ENCODE measurements at regions of chr2 and their contacts with region 1.

Region 1: DNA sequence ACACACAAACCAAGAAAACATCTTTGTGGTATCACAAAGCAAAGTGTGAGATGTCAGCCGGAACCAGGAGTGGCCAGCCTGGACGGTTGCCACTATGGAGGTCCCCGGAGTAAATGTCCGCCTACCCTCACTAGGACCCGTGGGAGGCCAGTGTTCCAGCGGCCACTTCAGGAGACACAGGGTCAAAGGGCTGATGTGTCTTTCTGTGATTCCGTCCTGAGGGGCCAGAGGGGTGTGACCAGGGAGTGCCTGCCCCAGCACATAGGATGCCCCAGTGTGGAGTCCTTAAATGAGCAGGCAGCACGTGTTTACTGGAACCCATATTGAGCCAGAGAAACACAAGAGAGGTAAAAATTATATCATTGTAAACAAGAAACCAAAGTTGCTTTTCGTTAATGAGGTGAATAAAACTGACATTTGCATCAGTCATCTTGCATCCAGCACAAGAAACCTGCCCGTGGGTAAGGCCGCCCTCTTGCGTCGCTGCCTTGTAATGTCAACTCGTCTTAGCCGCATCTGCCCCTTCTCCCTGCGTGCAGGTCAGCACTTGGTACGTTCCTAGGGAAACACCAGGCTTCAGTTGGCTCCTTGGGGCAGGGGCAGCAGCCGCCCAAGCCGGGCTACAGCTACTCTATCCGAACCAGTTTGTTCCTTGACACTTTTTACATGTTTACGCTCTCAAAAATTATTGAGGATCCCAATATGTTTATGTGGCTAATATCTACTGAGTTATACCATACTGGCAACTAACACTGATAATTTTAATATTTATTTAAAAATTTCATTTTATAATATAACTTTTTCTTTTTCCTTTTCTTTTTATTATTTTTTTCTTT is 46.7 kb upstream of the LAPTM4A start:
- DNase-seq: peak; percentile 47
- H3K4me3 ChIP-seq: no peak overlapping the region
- CTCF ChIP-seq: peak; percentile 93

Region 2: GRCh38 chr2:19955544-19956422 is 142.3 kb before region 1 on chr2:
- CTCF ChIA-PET with region 1: interaction called, 78 read pairs
- POLR2A ChIA-PET with region 1: no interaction called
- DNase-seq: peak; percentile 16
- H3K4me3 ChIP-seq: no peak overlapping the region
- CTCF ChIP-seq: peak; percentile 80

Region 3: DNA sequence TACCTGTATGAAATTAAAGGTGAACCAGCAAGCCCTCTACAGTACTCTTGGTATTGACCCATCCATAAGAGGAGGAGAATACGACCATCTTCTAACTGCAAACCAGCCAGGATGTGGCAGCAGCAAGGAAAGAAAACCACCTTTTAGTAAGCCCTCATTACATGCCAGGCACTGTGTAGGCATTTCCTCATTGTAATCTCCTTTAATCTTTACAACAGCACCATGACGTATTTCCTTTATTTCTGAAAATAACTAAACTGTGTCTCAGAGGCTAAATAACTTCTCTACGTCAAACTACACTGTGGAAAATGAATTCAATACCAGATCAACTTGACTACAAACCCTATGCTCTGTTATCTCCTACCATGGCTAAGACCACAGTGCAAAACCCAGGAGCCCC is 126.4 kb before region 1 on chr2:
- CTCF ChIA-PET with region 1: interaction called, 14 read pairs
- POLR2A ChIA-PET with region 1: no interaction called
- DNase-seq: no peak
- H3K4me3 ChIP-seq: no peak overlapping the region
- CTCF ChIP-seq: no peak

Region 4: DNA sequence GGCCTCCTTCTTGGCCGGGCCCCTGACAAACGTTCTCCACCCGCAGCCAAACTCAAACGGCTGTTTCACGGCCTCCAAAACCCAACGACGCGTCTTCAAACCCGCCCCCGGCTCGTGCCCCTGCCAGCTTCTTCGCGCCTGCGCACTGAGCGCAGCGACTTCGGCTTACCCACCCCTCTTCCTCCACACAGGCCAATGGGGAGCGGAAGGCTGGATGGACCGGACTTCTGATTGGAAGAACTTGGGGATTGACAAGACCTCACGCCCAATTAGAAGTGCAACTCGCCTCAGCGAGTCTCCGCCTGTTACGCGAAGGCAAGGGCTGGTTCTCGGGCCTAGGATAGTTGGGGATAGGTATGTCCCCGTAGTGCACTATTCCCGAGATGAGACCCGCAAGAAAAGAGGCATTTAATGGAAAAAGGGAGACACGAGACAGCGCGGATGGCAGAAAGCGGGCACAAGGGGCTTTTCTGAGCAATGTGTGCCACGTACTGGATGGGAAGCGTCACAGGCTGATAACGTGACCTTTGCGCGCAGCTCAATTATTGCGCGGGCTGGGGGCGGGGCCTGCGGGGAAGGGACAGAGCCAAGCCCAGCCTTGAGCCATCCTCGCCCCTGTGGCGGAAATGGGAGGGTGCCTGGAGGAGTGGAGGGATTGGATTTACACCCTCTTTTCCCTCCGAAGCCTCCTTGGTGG is 46.4 kb before region 1 on chr2 and contains the start of gene LAPTM4A:
- CTCF ChIA-PET with region 1: interaction called, 37 read pairs
- POLR2A ChIA-PET with region 1: interaction called, 3 read pairs
- DNase-seq: peak; percentile 100
- H3K4me3 ChIP-seq: peak within 1 kb of the TSS; percentile 88
- CTCF ChIP-seq: peak; percentile 13

Region 5: DNA sequence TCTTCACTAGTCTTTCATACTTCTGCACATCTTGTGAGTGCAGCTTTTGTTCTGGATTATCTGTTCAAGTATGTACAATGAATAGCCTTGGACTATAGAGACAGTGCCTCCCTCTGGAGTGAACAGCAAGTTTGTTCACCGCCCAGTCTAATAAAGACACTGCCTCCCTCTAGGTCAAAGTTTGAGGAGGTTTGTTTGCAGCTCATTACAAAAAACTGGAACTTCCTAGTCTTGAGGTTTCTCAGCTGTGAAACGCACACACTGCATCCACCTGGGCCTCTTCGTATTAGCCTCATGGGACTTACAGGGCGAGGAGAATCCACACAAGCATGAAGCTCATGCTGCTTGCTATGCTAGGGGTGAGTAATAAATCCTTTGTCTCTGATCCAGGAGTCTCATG is 20.6 kb before region 1 on chr2:
- CTCF ChIA-PET with region 1: interaction called, 19 read pairs
- POLR2A ChIA-PET with region 1: no interaction called
- DNase-seq: no peak
- H3K4me3 ChIP-seq: no peak overlapping the region
- CTCF ChIP-seq: no peak

Measured in AG04449 (cell line).